Activated CD8-positive, alpha-beta T cell treated with anti-CD3 and anti-CD28 coated beads, Interleukin-2, amount 10 ng/mL, durations not matched to agents 7 days and 5 days (primary cell): ENCODE measurements at regions of chr10 and their contacts with region 1.

Region 1: DNA sequence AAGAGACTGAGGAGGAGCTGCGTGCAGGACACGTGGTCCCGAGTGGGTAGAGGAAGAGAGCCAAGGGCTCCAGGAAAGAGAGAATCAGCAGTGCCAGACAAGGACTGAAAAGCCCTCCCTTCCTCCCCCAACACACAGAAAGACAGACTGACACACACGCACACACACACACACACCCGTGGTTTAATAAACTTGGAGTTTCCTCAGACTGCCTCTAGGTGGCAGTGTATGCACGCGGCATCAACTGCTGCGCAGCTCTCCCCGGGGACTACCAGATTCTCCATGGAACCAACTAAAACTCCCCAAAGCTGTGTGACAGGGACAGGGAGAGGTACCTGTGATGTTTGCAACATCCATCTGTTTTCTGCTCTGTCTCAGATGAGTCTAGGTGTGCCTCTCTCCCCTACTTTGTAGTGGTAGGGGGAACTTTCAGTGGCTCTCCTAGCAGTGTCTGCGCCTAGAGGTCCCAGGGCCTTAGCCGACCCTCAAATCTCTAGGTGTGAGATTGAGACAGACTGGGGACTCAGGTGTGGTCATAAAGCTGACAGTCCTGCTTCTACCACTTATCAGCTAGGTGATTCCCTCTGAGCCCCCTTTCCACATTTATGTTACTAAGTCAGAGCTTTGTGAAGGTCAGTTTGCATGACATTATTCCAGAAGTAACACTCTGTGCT is 9.3 kb upstream of the TSPAN14 start:
- DNase-seq: peak; percentile 62
- ATAC-seq: peak; percentile 89
- H3K4me3 Mint-ChIP-seq: no peak overlapping the region
- H3K27ac Mint-ChIP-seq: peak overlapping the region; percentile 82
- H3K4me1 Mint-ChIP-seq: peaks cover 39% of the 10 kb centered on the region
- H3K27me3 Mint-ChIP-seq: peaks cover 16% of the 10 kb centered on the region

Region 2: GRCh38 chr10:80382989-80383388 is 61.8 kb before region 1 on chr10:
- CTCF ChIA-PET with region 1: interaction called, 30 read pairs
- POLR2A ChIA-PET with region 1: interaction called, 3 read pairs
- DNase-seq: peak; percentile 76
- ATAC-seq: peak; percentile 68
- H3K4me3 Mint-ChIP-seq: no peak overlapping the region
- H3K27ac Mint-ChIP-seq: no peak overlapping the region
- H3K4me1 Mint-ChIP-seq: peaks cover 14% of the 10 kb centered on the region
- H3K27me3 Mint-ChIP-seq: peaks cover 12% of the 10 kb centered on the region

Region 3: GRCh38 chr10:80421707-80422536 is 22.9 kb before region 1 on chr10:
- CTCF ChIA-PET with region 1: interaction called, 20 read pairs
- POLR2A ChIA-PET with region 1: no interaction called
- DNase-seq: no peak
- ATAC-seq: no peak
- H3K4me3 Mint-ChIP-seq: no peak overlapping the region
- H3K27ac Mint-ChIP-seq: no peak overlapping the region
- H3K4me1 Mint-ChIP-seq: no peaks in the 10 kb centered on the region
- H3K27me3 Mint-ChIP-seq: no peaks in the 10 kb centered on the region

Region 4: GRCh38 chr10:80487791-80488538 is 43.2 kb after region 1 on chr10:
- CTCF ChIA-PET with region 1: interaction called, 22 read pairs
- POLR2A ChIA-PET with region 1: no interaction called
- DNase-seq: peak; percentile 88
- ATAC-seq: peak; percentile 74
- H3K4me3 Mint-ChIP-seq: peak overlapping the region; percentile 74
- H3K27ac Mint-ChIP-seq: peak overlapping the region; percentile 94
- H3K4me1 Mint-ChIP-seq: peaks cover 97% of the 10 kb centered on the region
- H3K27me3 Mint-ChIP-seq: no peaks in the 10 kb centered on the region

Region 5: DNA sequence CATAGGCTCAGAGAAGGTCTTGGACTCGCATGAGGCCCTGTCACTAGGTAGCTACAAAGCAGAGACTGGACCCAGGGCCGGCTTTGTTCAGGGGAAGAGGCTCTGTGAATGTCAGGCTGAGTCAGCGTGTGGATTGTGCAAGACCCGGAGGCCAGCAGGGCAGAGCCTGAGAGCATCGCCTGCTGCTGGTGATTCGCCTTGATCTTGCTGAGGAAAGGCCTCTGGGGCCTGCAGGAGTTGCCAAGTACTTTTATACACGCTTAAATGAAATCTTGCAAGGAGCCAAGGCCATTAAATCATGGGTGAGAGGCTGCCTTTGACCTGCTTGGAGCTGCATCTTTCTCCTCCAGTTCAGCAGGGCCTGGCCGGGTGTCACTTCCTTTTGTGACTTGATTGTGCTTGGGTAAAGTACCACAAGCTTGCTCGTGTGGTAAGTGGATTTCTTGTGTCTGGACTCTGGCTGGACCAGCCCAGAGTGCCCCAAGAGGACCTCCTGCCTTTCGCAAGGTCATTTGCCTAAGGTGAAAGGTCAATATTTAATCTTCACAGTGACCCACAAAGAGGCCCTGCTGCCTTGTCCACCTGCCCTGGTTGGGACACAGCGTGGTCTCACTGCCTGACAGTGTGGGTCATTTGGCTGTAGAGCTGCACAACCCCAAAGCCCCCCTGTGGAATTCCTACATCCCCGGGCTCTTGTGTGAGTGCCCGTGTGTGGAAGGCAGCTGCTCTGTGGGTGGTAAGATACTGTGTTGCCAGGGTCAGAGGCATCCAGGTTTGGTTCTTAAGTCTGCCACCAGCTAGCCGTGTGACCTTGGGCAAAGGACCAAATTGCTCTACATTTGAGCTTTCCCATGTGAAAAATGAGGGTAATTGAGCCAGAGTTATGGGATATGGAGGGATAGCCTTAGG is 54.3 kb after region 1 on chr10:
- CTCF ChIA-PET with region 1: interaction called, 1,113 read pairs
- POLR2A ChIA-PET with region 1: interaction called, 6 read pairs
- DNase-seq: peak; percentile 71
- ATAC-seq: peak; percentile 70
- H3K4me3 Mint-ChIP-seq: peak overlapping the region; percentile 64
- H3K27ac Mint-ChIP-seq: peak overlapping the region; percentile 90
- H3K4me1 Mint-ChIP-seq: peaks cover 97% of the 10 kb centered on the region
- H3K27me3 Mint-ChIP-seq: no peaks in the 10 kb centered on the region

Region 6: GRCh38 chr10:80542652-80543318 is 98.0 kb after region 1 on chr10:
- CTCF ChIA-PET with region 1: no interaction called
- POLR2A ChIA-PET with region 1: no interaction called
- DNase-seq: peak; percentile 5
- ATAC-seq: no peak
- H3K4me3 Mint-ChIP-seq: no peak overlapping the region
- H3K27ac Mint-ChIP-seq: peak overlapping the region; percentile 26
- H3K4me1 Mint-ChIP-seq: peaks cover 26% of the 10 kb centered on the region
- H3K27me3 Mint-ChIP-seq: peaks cover 5% of the 10 kb centered on the region